Right lobe of liver (tissue), 6 donors: ENCODE measurements at regions of chr5 and their contacts with region 1.

Region 1: GRCh38 chr5:170183816-170184687 is 48.7 kb upstream of the C5orf58 start:
- DNase-seq: peak; percentile 46 to 63 (median 59)
- ATAC-seq: peak; percentile 76 to 87 (median 81)
- H3K4me3 ChIP-seq: no peak overlapping the region
- H3K27ac ChIP-seq: no peak overlapping the region
- H3K4me1 ChIP-seq: no peaks in the 10 kb centered on the region
- H3K27me3 ChIP-seq: no peaks in the 10 kb centered on the region
- CTCF ChIP-seq: peak; percentile 44 to 72 (median 66)
- POLR2A ChIP-seq: no peak

Region 2: DNA sequence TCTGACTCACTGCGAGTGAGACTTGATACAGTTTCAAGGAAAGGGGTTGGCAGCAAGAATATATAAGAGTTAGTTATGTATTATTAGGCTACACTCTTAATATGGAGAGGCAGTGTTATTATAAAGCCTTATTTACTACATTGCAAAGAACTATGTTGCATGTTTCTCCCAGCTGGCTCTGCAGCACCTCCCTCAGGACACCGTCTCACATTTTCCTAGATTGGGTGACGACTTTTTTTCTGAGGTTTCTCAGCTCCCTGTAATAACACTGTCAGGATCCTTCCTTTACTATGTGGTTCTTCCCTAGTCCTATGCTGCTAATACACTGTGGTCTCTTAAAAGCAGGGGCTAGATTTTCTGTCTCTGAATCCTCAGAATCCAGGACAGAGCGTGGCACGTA is 357.4 kb before region 1 on chr5:
- intact Hi-C with region 1: no loop called
- DNase-seq: no peak
- ATAC-seq: no peak
- H3K4me3 ChIP-seq: no peak overlapping the region
- H3K27ac ChIP-seq: no peak overlapping the region
- H3K4me1 ChIP-seq: no peaks in the 10 kb centered on the region
- H3K27me3 ChIP-seq: no peaks in the 10 kb centered on the region
- CTCF ChIP-seq: no peak
- POLR2A ChIP-seq: no peak

Region 3: DNA sequence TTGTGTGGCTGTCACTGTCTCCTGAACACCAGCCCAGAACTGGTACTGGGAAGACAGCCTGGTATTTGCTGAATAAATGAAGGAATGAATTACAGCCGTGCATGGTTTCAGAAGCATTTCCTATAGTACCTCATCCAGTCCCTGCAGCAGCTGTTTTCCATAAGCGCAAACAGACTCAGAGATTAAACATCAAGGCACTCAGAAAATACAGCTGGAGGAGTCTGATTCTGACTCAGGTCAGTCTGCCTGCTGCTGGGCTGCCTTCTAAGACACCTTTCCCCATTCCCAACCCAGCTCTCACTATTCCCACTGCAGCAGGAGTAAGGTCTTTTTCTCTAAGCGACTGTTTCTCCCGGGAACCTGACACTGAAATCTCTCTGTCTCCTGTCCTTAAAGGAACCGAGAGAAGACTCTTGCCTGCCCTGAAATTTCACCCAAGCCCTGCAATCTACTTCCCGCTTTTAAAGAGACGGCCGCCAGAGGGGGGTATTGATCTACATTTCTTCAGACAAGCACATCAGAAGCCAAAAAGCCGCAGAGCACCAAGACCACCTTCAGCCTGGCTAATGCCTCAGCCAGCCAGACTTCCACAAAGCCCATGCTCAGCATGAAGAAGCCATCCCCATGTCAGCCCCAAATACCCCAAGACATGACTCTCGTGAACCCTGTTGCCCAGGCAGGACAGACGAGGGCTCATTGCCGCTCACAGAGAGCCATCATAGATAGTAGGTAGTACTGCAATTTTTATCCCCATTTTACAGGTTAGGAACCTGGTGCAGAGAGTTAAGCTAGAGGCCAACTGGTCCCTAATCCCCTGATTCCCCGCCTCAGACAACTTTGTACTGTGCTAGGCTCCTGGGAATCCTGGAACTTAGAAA is 83.7 kb before region 1 on chr5:
- intact Hi-C with region 1: loop called in 1 of 2 experiments (anchors 10 kb)
- DNase-seq: peak; percentile 62 to 73 (median 67)
- ATAC-seq: peak; percentile 53 to 77 (median 71)
- H3K4me3 ChIP-seq: no peak overlapping the region
- H3K27ac ChIP-seq: no peak overlapping the region
- H3K4me1 ChIP-seq: no peaks in the 10 kb centered on the region
- H3K27me3 ChIP-seq: no peaks in the 10 kb centered on the region
- CTCF ChIP-seq: peak; percentile 53 to 67 (median 61)
- POLR2A ChIP-seq: no peak

Region 4: DNA sequence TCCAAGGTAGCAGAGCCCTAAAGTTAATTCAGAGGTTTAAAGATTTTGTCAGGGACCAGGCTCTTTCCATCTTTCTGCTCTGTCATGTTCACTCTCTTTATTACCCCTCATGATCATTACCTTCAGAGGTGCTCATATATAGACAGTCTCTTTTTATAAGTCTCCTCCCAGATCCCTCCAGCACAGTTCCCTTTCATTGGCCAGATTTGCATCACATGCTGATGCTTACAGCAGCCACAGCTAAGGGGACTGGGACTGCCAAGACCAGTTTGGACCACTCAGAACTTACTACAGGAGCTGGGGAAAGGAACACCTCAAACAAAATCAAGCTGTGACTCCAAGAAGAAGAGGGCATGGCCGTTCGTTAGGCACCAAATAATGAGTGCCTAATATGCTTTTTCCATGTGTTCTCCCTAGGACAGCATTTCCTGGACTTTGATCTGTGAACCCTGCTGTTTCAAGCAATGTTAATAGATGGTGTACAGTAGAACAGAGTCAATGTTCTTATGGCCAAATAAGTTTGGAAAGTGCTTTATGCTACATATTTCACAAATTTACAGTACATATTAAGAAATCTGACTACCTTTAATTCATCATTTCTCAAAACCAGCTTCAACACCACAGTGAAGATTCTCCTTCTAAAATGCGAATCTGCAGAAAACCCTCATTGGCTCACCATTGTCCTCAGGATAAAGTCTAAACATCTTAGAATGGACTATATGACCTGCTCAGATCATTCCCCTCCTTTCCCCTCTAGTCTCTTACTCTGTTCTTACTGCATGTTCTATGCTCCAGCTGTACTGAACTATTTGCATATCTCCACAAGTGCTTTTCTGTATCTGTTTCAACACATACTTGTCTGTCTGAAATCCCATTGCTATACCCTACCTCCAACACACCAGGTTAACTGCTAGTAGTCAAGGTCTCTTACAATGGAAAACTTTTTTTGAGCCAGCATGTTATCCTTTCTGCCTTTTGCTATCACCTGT is 52.1 kb after region 1 on chr5:
- intact Hi-C with region 1: no loop called
- DNase-seq: no peak
- ATAC-seq: peak; percentile 35 to 64 (median 51)
- H3K4me3 ChIP-seq: no peak overlapping the region
- H3K27ac ChIP-seq: no peak overlapping the region
- H3K4me1 ChIP-seq: no peaks in the 10 kb centered on the region
- H3K27me3 ChIP-seq: no peaks in the 10 kb centered on the region
- CTCF ChIP-seq: no peak
- POLR2A ChIP-seq: no peak